Activated CD4-positive, alpha-beta T cell treated with anti-CD3 and anti-CD28 coated beads for 36 hours (primary cell): ENCODE measurements at regions of chr9 and their contacts with region 1.

Region 1: GRCh38 chr9:134171316-134172197 is 7.2 kb upstream of the RNU6ATAC start:
- DNase-seq: no peak
- ATAC-seq: no peak
- H3K4me3 Mint-ChIP-seq: no peak overlapping the region
- H3K27ac Mint-ChIP-seq: no peak overlapping the region
- H3K4me1 Mint-ChIP-seq: no peaks in the 10 kb centered on the region
- H3K27me3 Mint-ChIP-seq: no peaks in the 10 kb centered on the region

Region 2: DNA sequence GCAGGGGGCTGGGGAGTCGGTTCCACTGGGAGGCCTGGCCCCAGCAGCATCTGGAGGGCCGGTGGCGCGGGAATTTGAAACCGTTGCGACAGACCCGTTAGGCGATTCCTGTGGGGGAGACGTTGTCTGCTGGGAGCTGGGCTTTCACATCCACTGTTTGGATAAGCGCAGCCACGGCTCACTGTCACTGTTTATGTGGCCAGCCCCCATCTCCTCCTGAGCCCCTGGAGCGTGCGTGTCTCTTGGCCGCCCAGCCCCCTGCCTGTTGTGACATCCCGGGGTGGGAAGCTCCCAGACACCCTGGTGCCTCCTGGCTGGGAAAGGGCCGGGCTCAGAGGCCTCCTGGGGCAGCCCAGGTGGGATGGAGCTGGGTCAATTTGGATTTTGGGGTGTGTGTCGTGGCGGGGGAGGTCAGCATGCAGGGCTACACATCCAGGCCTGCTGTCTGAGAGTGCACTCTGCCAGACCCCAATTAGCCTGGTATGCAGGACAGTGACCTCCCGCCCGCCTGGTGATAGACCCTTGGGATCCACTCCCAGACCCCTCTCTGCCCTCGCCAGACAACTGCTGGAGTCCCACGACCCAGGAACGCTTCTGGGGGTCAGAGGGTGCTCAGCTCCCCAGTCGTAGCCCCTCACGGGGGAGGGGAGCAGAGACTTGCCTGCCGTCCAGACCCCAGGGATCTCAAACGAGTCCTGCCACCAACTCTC is 54.8 kb after region 1 on chr9:
- CTCF ChIA-PET with region 1: no interaction called
- POLR2A ChIA-PET with region 1: no interaction called
- intact Hi-C with region 1: no loop called
- DNase-seq: no peak
- ATAC-seq: no peak
- H3K4me3 Mint-ChIP-seq: no peak overlapping the region
- H3K27ac Mint-ChIP-seq: no peak overlapping the region
- H3K4me1 Mint-ChIP-seq: no peaks in the 10 kb centered on the region
- H3K27me3 Mint-ChIP-seq: no peaks in the 10 kb centered on the region

Region 3: DNA sequence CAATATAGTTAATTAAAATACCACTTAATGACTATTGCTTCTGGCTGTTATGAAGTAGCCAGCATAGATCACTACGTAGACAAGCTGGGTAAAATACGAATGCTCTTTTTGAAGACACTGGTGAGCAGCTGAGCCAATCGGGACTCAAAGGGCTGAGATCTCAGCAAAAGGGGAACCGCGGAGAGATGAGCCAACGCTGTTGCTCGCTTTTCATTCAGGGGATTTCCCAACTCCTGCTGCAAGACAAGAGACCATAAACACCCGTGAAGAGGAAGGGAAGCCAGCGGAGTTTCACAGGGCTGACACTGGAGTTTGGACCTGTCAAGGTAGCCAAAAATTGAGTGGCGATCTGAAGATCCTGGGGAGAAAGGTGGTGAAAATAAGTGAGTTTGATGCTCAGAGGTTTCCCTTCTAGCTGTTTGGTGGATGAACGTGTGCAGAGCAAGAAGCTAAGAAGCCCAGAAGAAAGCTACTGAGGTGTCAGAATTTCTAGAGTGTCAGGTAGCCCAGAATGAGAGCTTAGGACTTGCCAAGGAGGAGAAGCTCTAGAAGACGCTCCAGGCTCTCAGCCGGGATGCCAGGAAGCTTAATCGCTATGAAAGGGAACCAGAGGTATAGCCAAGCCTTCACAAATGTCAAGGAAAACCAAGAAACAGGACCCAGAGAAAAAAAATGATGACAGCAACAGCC is 72.4 kb after region 1 on chr9:
- CTCF ChIA-PET with region 1: interaction called, 3 read pairs
- POLR2A ChIA-PET with region 1: no interaction called
- intact Hi-C with region 1: loop called in 1 of 2 experiments (anchors 5 kb)
- DNase-seq: peak; percentile 67
- ATAC-seq: peak; percentile 95
- H3K4me3 Mint-ChIP-seq: no peak overlapping the region
- H3K27ac Mint-ChIP-seq: peak overlapping the region; percentile 37
- H3K4me1 Mint-ChIP-seq: peaks cover 8% of the 10 kb centered on the region
- H3K27me3 Mint-ChIP-seq: no peaks in the 10 kb centered on the region